CD4-positive, alpha-beta memory T cell (primary cell): ENCODE measurements at regions of chr1 and their contacts with region 1.

Region 1: GRCh38 chr1:172398970-172399755 is 21.3 kb upstream of the C1orf105 start:
- DNase-seq: peak in 4 of 5 donors; percentile 43 to 55 (median 49)
- H3K4me3 ChIP-seq: peak overlapping the region in 1 of 2 donors; percentile 20
- H3K4me3 Mint-ChIP-seq: peak overlapping the region; percentile 21 to 80 (median 70)
- H3K27ac ChIP-seq: no peak overlapping the region
- H3K27ac Mint-ChIP-seq: peak overlapping the region; percentile 64 to 82 (median 77)
- H3K4me1 ChIP-seq: peaks cover 44% of the 10 kb centered on the region
- H3K4me1 Mint-ChIP-seq: peaks cover 32 to 68% (median 53%) of the 10 kb centered on the region in 4 donors
- H3K27me3 ChIP-seq: no peaks in the 10 kb centered on the region
- H3K27me3 Mint-ChIP-seq: no peaks in the 10 kb centered on the region

Region 2: GRCh38 chr1:171781176-171781875 is 617.8 kb before region 1 on chr1 and contains the start of gene METTL13:
- CTCF ChIA-PET with region 1: no interaction called
- POLR2A ChIA-PET with region 1: interaction called, 3 read pairs
- intact Hi-C with region 1: loop called (anchors 10 kb)
- DNase-seq: peak; percentile 98 to 100 (median 99)
- H3K4me3 ChIP-seq: peak within 1 kb of the TSS; percentile 92 to 99
- H3K4me3 Mint-ChIP-seq: peak within 1 kb of the TSS; percentile 94 to 100 (median 96)
- H3K27ac ChIP-seq: peak within 1 kb of the TSS; percentile 71
- H3K27ac Mint-ChIP-seq: peak within 1 kb of the TSS; percentile 86 to 99 (median 98)
- H3K4me1 ChIP-seq: peaks cover 53% of the 10 kb centered on the region
- H3K4me1 Mint-ChIP-seq: peaks cover 37 to 67% (median 48%) of the 10 kb centered on the region in 4 donors
- H3K27me3 ChIP-seq: no peaks in the 10 kb centered on the region
- H3K27me3 Mint-ChIP-seq: no peaks in the 10 kb centered on the region
- total RNA-seq, gene METTL13: 33.3 to 36.7 TPM

Region 3: DNA sequence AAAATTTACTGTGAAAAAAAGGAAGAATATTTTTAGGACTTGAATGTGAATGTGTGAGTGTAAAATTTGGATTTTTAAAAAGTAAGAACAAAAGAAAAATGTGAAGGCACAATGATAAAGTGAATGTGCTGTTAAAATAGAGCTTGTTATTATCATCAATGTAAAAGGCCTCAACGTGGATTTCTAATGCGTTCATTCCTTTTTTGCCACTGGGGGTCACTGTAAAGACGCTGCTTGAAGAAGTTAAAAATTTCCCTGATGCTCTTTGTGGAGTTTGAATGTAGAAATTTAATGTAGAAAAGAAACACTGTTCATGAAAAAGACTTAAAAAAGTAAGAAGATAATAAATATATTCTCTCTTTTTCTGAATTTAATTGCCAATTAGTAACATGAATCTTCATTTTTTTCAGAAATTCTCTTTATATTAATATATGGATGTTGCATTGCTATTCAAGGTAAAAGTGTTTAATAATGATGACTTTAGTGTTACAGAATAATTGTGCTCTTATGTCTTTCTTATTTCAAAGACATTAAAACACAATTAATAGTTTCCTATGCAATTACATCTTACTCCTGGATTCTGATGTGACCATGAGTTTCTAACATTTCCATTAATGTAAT is 396.3 kb before region 1 on chr1:
- CTCF ChIA-PET with region 1: interaction called, 42 read pairs
- POLR2A ChIA-PET with region 1: no interaction called
- intact Hi-C with region 1: loop called (anchors 1 kb)
- DNase-seq: peak; percentile 30 to 46 (median 32)
- H3K4me3 ChIP-seq: no peak overlapping the region
- H3K4me3 Mint-ChIP-seq: no peak overlapping the region
- H3K27ac ChIP-seq: no peak overlapping the region
- H3K27ac Mint-ChIP-seq: no peak overlapping the region
- H3K4me1 ChIP-seq: no peaks in the 10 kb centered on the region
- H3K4me1 Mint-ChIP-seq: peaks cover 6 to 16% (median 8%) of the 10 kb centered on the region in 4 donors
- H3K27me3 ChIP-seq: no peaks in the 10 kb centered on the region
- H3K27me3 Mint-ChIP-seq: no peaks in the 10 kb centered on the region

Region 4: GRCh38 chr1:172135076-172135672 is 264.0 kb before region 1 on chr1:
- CTCF ChIA-PET with region 1: interaction called, 58 read pairs
- POLR2A ChIA-PET with region 1: interaction called, 5 read pairs
- intact Hi-C with region 1: loop called (anchors 1 kb)
- DNase-seq: peak in 3 of 5 donors; percentile 19 to 32 (median 22)
- H3K4me3 ChIP-seq: no peak overlapping the region
- H3K4me3 Mint-ChIP-seq: no peak overlapping the region
- H3K27ac ChIP-seq: no peak overlapping the region
- H3K27ac Mint-ChIP-seq: no peak overlapping the region
- H3K4me1 ChIP-seq: no peaks in the 10 kb centered on the region
- H3K4me1 Mint-ChIP-seq: peaks cover 0 to 8% (median 5%) of the 10 kb centered on the region in 4 donors
- H3K27me3 ChIP-seq: no peaks in the 10 kb centered on the region
- H3K27me3 Mint-ChIP-seq: no peaks in the 10 kb centered on the region

Region 5: GRCh38 chr1:172351761-172352161 is 47.4 kb before region 1 on chr1:
- CTCF ChIA-PET with region 1: interaction called, 3 read pairs
- POLR2A ChIA-PET with region 1: interaction called, 10 read pairs
- intact Hi-C with region 1: no loop called
- DNase-seq: no peak
- H3K4me3 ChIP-seq: no peak overlapping the region
- H3K4me3 Mint-ChIP-seq: no peak overlapping the region
- H3K27ac ChIP-seq: no peak overlapping the region
- H3K27ac Mint-ChIP-seq: peak overlapping the region in 1 of 7 donors; percentile 43
- H3K4me1 ChIP-seq: peaks cover 24% of the 10 kb centered on the region
- H3K4me1 Mint-ChIP-seq: peaks cover 22 to 43% (median 30%) of the 10 kb centered on the region in 4 donors
- H3K27me3 ChIP-seq: no peaks in the 10 kb centered on the region
- H3K27me3 Mint-ChIP-seq: no peaks in the 10 kb centered on the region

Region 6: GRCh38 chr1:172380441-172381244 is 18.5 kb before region 1 on chr1:
- CTCF ChIA-PET with region 1: interaction called, 24 read pairs
- POLR2A ChIA-PET with region 1: interaction called, 16 read pairs
- intact Hi-C with region 1: loop called (anchors 1 kb)
- DNase-seq: peak; percentile 53 to 80 (median 72)
- H3K4me3 ChIP-seq: peak overlapping the region in 1 of 2 donors; percentile 22
- H3K4me3 Mint-ChIP-seq: peak overlapping the region; percentile 65 to 91 (median 77)
- H3K27ac ChIP-seq: peak overlapping the region; percentile 54
- H3K27ac Mint-ChIP-seq: peak overlapping the region; percentile 80 to 97 (median 91)
- H3K4me1 ChIP-seq: peaks cover 31% of the 10 kb centered on the region
- H3K4me1 Mint-ChIP-seq: peaks cover 17 to 39% (median 29%) of the 10 kb centered on the region in 4 donors
- H3K27me3 ChIP-seq: no peaks in the 10 kb centered on the region
- H3K27me3 Mint-ChIP-seq: no peaks in the 10 kb centered on the region

Region 7: GRCh38 chr1:172443626-172444453 is 44.7 kb after region 1 on chr1 and contains the start of gene PIGC:
- CTCF ChIA-PET with region 1: interaction called, 9 read pairs
- POLR2A ChIA-PET with region 1: interaction called, 3 read pairs
- intact Hi-C with region 1: loop called (anchors 5 kb)
- DNase-seq: peak; percentile 86 to 89 (median 87)
- H3K4me3 ChIP-seq: peak within 1 kb of the TSS; percentile 44 to 83
- H3K4me3 Mint-ChIP-seq: peak within 1 kb of the TSS; percentile 92 to 98 (median 96)
- H3K27ac ChIP-seq: peak within 1 kb of the TSS; percentile 67
- H3K27ac Mint-ChIP-seq: peak within 1 kb of the TSS; percentile 89 to 97 (median 95)
- H3K4me1 ChIP-seq: peaks cover 36% of the 10 kb centered on the region
- H3K4me1 Mint-ChIP-seq: peaks cover 32 to 49% (median 41%) of the 10 kb centered on the region in 4 donors
- H3K27me3 ChIP-seq: no peaks in the 10 kb centered on the region
- H3K27me3 Mint-ChIP-seq: no peaks in the 10 kb centered on the region
- total RNA-seq, gene PIGC: 48.9 to 49.2 TPM

Region 8: DNA sequence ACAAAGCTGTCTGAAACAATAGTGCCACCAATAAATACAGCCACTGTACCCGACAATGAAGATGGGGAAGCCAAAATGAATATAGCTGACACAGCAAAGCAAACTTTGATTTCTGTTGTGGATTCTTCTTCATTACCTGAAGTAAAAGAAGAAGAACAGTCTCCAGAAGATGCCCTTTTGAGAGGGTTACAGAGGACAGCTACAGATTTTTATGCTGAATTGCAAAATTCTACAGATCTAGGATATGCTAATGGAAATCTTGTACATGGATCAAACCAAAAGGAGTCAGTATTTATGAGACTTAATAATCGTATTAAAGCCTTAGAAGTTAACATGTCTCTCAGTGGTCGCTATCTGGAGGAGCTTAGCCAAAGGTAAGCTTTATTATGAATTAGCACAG is 190.4 kb after region 1 on chr1:
- CTCF ChIA-PET with region 1: no interaction called
- POLR2A ChIA-PET with region 1: no interaction called
- intact Hi-C with region 1: no loop called
- DNase-seq: no peak
- H3K4me3 ChIP-seq: no peak overlapping the region
- H3K4me3 Mint-ChIP-seq: peak overlapping the region in 1 of 8 donors; percentile 59
- H3K27ac ChIP-seq: no peak overlapping the region
- H3K27ac Mint-ChIP-seq: peak overlapping the region in 3 of 7 donors; percentile 43 to 80 (median 62)
- H3K4me1 ChIP-seq: peaks cover 5% of the 10 kb centered on the region
- H3K4me1 Mint-ChIP-seq: peaks cover 9 to 37% (median 20%) of the 10 kb centered on the region in 4 donors
- H3K27me3 ChIP-seq: no peaks in the 10 kb centered on the region
- H3K27me3 Mint-ChIP-seq: no peaks in the 10 kb centered on the region